ENCODE measurements at regions of chr10 and their contacts with region 1.

Region 1: GRCh38 chr10:46268076-46268881 is 18.5 kb upstream of the ANTXRL start:
- DNase-seq: peak in 8 of 10 donors; percentile 26 to 88 (median 52)
- ATAC-seq: peak; percentile 77 to 80
- H3K4me3 Mint-ChIP-seq: no peak overlapping the region
- H3K27ac Mint-ChIP-seq: no peak overlapping the region
- H3K4me1 Mint-ChIP-seq: peaks cover 30 to 57% (median 48%) of the 10 kb centered on the region in 4 donors
- H3K27me3 Mint-ChIP-seq: no peaks in the 10 kb centered on the region

Region 2: DNA sequence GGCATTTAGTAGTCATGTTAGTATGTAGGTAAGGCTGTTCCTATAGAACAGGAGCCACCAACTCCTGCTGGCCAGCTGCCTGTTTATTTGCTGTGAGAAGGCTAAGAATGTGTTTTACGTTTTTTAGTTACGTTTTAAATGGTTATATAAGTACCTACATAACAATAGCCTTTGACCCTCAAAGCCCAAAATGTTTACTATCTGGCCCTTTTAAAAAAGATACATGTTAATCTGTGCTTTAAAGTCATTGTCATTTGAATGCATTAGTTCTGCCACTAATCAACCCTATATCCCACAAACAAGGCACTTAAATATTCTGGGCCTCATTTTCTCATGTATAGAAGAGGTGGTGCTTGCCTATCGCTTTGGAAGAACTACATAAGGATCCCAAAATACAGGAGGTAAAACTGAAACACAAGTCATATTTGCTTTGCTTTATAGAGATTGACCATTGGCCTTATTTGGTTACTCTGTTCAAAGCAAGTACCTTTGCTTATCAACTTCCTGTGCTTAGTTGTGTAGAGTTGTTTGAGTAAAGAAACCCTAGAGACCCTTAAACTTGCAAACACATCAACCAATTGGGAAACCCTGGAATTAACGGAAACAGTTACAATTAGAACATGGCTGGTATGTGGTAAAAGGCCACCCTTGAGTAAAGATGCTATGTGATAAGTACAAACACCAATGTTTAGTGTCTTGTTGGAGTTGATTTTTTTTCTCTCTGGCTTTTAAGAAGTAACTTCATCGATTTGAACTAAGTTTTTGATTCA is 270.1 kb before region 1 on chr10:
- POLR2A ChIA-PET with region 1: no interaction called
- DNase-seq: no peak
- ATAC-seq: no peak
- H3K4me3 Mint-ChIP-seq: no peak overlapping the region
- H3K27ac Mint-ChIP-seq: peak overlapping the region in 3 of 10 donors; percentile 29 to 42 (median 31)
- H3K4me1 Mint-ChIP-seq: peaks cover 0 to 3% (median 2%) of the 10 kb centered on the region in 4 donors
- H3K27me3 Mint-ChIP-seq: no peaks in the 10 kb centered on the region

Region 3: DNA sequence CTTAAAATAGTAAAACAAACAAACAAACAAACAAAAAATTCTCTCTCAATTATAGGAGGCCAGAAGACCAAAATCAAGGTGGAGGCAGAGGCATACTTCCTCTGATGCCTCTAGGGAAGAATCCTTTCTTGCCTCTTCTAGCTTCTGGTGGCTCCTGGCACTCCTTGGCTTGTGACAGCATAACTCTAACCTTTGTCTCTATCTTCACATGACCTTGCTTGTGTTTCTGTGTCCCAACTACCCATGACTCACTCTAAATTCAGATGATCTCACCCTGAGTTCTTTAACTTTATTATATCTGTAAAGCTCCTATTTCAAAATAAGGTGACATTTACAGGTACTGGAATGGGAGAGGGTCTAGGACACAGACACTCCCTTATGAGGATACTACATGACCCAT is 69.8 kb before region 1 on chr10:
- POLR2A ChIA-PET with region 1: no interaction called
- DNase-seq: no peak
- ATAC-seq: no peak
- H3K4me3 Mint-ChIP-seq: no peak overlapping the region
- H3K27ac Mint-ChIP-seq: no peak overlapping the region
- H3K4me1 Mint-ChIP-seq: peaks cover 6 to 22% (median 12%) of the 10 kb centered on the region in 4 donors
- H3K27me3 Mint-ChIP-seq: no peaks in the 10 kb centered on the region

Region 4: GRCh38 chr10:46228563-46229071 is 39.7 kb before region 1 on chr10:
- POLR2A ChIA-PET with region 1: no interaction called
- DNase-seq: peak; percentile 33 to 80 (median 53)
- ATAC-seq: peak; percentile 79 to 90
- H3K4me3 Mint-ChIP-seq: no peak overlapping the region
- H3K27ac Mint-ChIP-seq: peak overlapping the region in 4 of 10 donors; percentile 17 to 87 (median 46)
- H3K4me1 Mint-ChIP-seq: peaks cover 7 to 34% (median 15%) of the 10 kb centered on the region in 4 donors
- H3K27me3 Mint-ChIP-seq: no peaks in the 10 kb centered on the region

Region 5: DNA sequence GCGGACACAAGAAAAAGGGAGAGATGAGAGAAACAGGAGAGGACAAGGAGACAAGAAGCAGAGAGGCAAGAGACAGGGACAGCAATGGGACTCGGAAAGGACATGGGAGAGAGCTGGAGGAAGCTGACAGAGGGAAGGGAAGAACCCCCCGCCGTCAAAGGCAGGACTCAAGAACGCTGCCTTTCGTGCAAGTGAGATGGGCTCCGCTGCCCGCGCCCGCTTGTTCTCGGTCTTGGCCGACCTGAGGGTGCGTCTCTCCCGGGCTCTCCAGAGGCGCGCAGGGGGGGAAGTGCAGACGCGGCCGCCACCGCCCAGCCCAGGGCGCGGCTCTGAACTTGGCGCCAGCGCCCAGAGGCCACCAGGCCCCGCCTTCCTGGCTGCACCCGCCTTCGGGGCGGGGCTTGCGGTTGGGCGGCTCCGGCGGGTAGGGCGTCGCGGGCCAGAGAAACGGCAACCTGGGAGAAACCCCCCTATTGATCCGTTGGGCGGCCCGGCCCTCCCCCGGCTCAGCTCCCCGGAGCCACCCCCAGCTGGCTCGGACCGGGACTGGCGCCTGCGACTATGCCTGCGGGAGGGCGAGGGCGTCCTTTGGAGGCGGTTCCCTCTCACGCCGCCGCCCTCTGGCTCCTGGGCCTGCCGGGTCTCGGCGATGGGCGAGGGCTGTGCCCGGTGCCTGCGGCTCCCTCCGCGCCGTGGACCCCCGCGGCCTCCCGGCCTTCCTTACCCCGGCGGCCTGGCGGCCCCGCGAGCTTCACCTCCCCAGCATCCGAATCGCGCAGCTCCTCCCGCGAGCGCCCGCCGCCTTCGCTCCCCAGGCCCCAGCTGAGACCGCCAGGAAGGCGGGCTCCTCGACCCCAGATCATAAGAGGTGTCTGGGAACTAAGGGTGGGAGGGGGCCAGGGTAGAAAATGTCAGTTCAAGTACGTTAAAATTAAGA is 16.3 kb after region 1 on chr10:
- POLR2A ChIA-PET with region 1: interaction called, 35 read pairs
- DNase-seq: peak; percentile 32 to 81 (median 69)
- ATAC-seq: peak; percentile 67 to 74
- H3K4me3 Mint-ChIP-seq: peak overlapping the region; percentile 79 to 93 (median 87)
- H3K27ac Mint-ChIP-seq: peak overlapping the region in 9 of 10 donors; percentile 13 to 87 (median 75)
- H3K4me1 Mint-ChIP-seq: peaks cover 9 to 27% (median 21%) of the 10 kb centered on the region in 4 donors
- H3K27me3 Mint-ChIP-seq: peaks cover 0 to 9% (median 0%) of the 10 kb centered on the region in 5 donors

Region 6: DNA sequence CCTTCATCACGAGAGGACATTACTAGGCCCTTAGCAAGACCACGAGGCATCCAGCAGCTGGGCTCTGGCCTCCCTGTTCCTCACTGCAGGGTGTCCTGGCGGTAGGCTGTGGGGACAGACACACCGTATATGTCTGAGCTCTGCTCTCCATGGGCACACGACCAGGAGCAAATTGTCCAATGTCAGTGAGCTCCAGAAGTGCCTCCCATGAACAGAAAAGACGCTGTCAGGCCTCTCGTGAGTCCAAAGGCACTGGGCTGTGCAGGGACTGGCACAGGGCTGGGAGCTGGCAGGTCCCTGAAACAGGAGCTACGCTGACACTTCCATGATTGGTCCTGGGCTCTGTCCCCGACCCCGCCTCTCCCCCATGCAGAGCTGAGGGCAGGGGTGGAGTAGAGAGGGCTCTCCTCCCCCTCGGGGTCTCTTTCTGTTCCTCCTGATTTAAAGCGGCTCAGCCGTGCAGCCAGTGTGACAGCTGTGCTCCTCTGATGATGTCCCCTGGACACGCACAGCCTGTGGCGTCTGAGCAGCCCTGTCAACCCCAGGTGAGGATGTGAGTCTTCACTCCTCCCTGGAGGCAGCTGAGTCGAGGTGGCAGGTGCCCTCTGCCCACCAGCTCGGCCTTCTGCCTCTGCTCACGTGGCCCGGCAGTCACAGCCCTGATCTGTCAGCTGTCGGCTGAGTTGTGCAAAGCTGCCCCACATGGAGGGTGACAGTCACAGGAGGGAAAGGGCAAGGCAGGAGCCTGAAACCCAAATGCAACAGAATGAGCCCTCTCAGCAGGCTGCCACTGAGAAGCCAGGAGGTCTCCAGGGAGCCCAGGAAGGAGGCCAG is 31.5 kb after region 1 on chr10:
- POLR2A ChIA-PET with region 1: interaction called, 10 read pairs
- DNase-seq: no peak
- ATAC-seq: peak in 1 of 2 donors; percentile 20
- H3K4me3 Mint-ChIP-seq: peak overlapping the region in 5 of 10 donors; percentile 6 to 50 (median 28)
- H3K27ac Mint-ChIP-seq: peak overlapping the region in 4 of 10 donors; percentile 8 to 53 (median 32)
- H3K4me1 Mint-ChIP-seq: peaks cover 24 to 34% (median 28%) of the 10 kb centered on the region in 4 donors
- H3K27me3 Mint-ChIP-seq: peaks cover 0 to 4% (median 0%) of the 10 kb centered on the region in 5 donors

Region 7: GRCh38 chr10:46311501-46312441 is 43.5 kb after region 1 on chr10:
- POLR2A ChIA-PET with region 1: no interaction called
- DNase-seq: no peak
- ATAC-seq: no peak
- H3K4me3 Mint-ChIP-seq: no peak overlapping the region
- H3K27ac Mint-ChIP-seq: no peak overlapping the region
- H3K4me1 Mint-ChIP-seq: no peaks in the 10 kb centered on the region
- H3K27me3 Mint-ChIP-seq: peaks cover 0 to 3% (median 0%) of the 10 kb centered on the region in 5 donors